IMR-90 (cell line): ENCODE measurements at regions of chr5 and their contacts with region 1.

Region 1: DNA sequence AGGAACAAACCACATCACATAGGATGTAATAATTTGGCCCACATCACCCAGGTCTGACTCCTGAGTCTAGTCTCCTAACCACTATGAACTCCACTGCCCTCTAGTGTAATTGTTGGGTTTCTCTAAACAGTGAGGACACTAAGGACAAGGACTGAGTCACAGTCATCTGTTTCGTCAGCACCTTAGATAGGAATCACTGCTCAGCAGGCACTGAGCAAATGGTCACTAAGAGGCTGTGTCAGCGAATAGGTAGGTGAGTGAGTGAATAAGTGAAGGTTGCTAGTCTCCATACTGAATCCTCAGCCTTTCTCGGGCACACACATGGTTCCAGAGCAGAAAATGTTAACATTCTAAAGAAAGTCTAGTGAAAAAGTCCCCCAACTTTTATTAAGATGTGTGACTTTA is 278.6 kb downstream of the SPOCK1 start:
- DNase-seq: peak; percentile 78
- ATAC-seq: peak; percentile 96
- H3K4me3 ChIP-seq: no peak overlapping the region
- H3K27ac ChIP-seq: no peak overlapping the region
- H3K4me1 ChIP-seq: 0 out of 2 replicates have a peak, but pooled peaks cover 2% of the 10 kb centered on the region
- H3K27me3 ChIP-seq: no peaks in the 10 kb centered on the region; the same call in 1 of the 2 replicates
- CTCF ChIP-seq: peak; percentile 66
- POLR2A ChIP-seq: no peak
- RAD21 ChIP-seq: peak; percentile 67

Region 2: GRCh38 chr5:136364307-136364706 is 856.2 kb before region 1 on chr5:
- CTCF ChIA-PET with region 1: no interaction called
- POLR2A ChIA-PET with region 1: no interaction called
- dilution Hi-C with region 1: no loop called
- in situ Hi-C with region 1: no loop called
- intact Hi-C with region 1: loop called (anchors 2 kb)
- DNase-seq: no peak
- ATAC-seq: no peak
- H3K4me3 ChIP-seq: no peak overlapping the region
- H3K27ac ChIP-seq: no peak overlapping the region
- H3K4me1 ChIP-seq: no peaks in the 10 kb centered on the region
- H3K27me3 ChIP-seq: no peaks in the 10 kb centered on the region
- CTCF ChIP-seq: peak; percentile 29
- POLR2A ChIP-seq: no peak
- RAD21 ChIP-seq: no peak

Region 3: GRCh38 chr5:136802383-136802782 is 418.1 kb before region 1 on chr5:
- CTCF ChIA-PET with region 1: no interaction called
- POLR2A ChIA-PET with region 1: no interaction called
- dilution Hi-C with region 1: no loop called
- in situ Hi-C with region 1: no loop called
- intact Hi-C with region 1: loop called (anchors 5 kb)
- DNase-seq: peak; percentile 5
- ATAC-seq: no peak
- H3K4me3 ChIP-seq: no peak overlapping the region
- H3K27ac ChIP-seq: no peak overlapping the region
- H3K4me1 ChIP-seq: no peaks in the 10 kb centered on the region
- H3K27me3 ChIP-seq: no peaks in the 10 kb centered on the region
- CTCF ChIP-seq: peak; percentile 41
- POLR2A ChIP-seq: no peak
- RAD21 ChIP-seq: peak; percentile 54